CD8-positive, alpha-beta memory T cell (primary cell): ENCODE measurements at regions of chr17 and their contacts with region 1.

Region 1: GRCh38 chr17:17812211-17813057 is 24.4 kb downstream of the SREBF1 start:
- DNase-seq: peak; percentile 56 to 75 (median 67)
- H3K4me3 ChIP-seq: no peak overlapping the region
- H3K4me3 Mint-ChIP-seq: peak overlapping the region in 1 of 7 donors; percentile 18
- H3K27ac ChIP-seq: no peak overlapping the region
- H3K27ac Mint-ChIP-seq: peak overlapping the region in 6 of 8 donors; percentile 17 to 78 (median 54)
- H3K4me1 ChIP-seq: peaks cover 7% of the 10 kb centered on the region
- H3K4me1 Mint-ChIP-seq: peaks cover 6 to 17% (median 12%) of the 10 kb centered on the region in 3 donors
- H3K27me3 ChIP-seq: no peaks in the 10 kb centered on the region
- H3K27me3 Mint-ChIP-seq: no peaks in the 10 kb centered on the region

Region 2: DNA sequence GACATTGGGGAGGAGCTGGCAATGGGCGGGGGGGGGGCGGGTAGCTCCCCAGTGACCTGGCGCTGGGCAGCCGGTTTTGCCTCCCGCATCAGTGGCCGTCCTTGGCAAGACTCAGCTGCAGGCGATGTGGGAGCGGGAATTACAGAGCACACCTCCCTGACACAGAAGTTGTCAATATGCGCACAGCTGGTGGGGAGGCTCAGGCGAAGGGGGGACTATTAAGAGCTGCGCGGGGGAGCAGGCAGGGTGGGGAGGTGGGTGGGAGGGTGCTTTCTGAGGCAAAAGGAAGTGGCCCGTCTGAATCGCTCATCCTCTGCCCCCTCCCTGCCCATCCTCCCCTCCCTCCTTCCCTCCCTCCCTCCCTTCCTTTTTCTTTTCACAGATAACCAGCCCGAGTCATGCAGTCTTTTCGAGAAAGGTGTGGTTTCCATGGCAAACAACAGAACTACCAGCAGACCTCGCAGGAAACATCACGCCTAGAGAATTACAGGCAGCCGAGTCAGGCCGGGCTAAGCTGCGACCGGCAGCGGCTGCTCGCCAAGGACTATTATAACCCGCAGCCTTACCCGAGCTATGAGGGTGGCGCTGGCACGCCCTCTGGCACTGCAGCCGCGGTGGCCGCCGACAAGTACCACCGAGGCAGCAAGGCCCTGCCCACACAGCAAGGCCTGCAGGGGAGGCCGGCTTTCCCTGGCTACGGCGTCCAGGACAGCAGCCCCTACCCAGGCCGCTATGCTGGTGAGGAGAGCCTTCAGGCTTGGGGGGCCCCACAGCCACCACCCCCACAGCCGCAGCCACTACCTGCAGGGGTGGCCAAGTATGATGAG is 19.7 kb before region 1 on chr17:
- CTCF ChIA-PET with region 1: interaction called, 11 read pairs
- POLR2A ChIA-PET with region 1: no interaction called
- DNase-seq: peak; percentile 41 to 78 (median 74)
- H3K4me3 ChIP-seq: no peak overlapping the region
- H3K4me3 Mint-ChIP-seq: peak overlapping the region; percentile 27 to 86 (median 73)
- H3K27ac ChIP-seq: peak overlapping the region; percentile 54
- H3K27ac Mint-ChIP-seq: peak overlapping the region; percentile 53 to 92 (median 71)
- H3K4me1 ChIP-seq: peaks cover 20% of the 10 kb centered on the region
- H3K4me1 Mint-ChIP-seq: peaks cover 18 to 27% (median 18%) of the 10 kb centered on the region in 3 donors
- H3K27me3 ChIP-seq: no peaks in the 10 kb centered on the region
- H3K27me3 Mint-ChIP-seq: peaks cover 0 to 1% of the 10 kb centered on the region in 2 donors

Region 3: DNA sequence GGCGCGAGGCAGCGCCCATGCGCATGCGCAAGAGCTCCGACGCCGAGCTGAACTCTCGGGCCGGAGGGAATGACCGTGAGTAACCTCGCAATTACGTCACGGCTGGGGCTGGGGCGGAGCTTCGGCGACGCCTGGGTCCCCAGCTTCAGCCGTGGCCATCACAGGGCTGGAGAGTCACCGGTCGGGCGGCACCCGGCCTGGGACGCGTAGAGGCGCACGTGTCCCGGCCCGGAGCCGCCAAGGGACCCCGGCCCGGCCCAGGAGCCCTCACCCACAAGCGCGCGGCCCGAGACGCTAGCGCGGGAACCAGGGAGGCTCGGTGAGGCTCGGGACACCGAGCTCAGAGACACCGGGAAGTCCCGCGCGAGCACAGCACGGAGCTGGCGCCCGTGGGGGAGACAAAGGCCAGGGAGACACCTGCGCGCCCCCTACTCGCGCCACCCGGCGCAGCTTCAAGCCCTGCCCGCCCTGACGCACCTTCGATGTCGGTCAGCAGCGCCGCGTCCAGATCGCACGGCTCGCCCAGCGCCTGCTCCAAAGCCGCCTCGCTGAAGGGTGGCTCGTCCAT is 23.9 kb after region 1 on chr17:
- CTCF ChIA-PET with region 1: interaction called, 13 read pairs
- POLR2A ChIA-PET with region 1: interaction called, 4 read pairs
- DNase-seq: peak; percentile 96 to 98 (median 98)
- H3K4me3 ChIP-seq: peak overlapping the region; percentile 47
- H3K4me3 Mint-ChIP-seq: peak overlapping the region; percentile 82 to 94 (median 88)
- H3K27ac ChIP-seq: peak overlapping the region; percentile 97
- H3K27ac Mint-ChIP-seq: peak overlapping the region; percentile 90 to 99 (median 98)
- H3K4me1 ChIP-seq: peaks cover 65% of the 10 kb centered on the region
- H3K4me1 Mint-ChIP-seq: peaks cover 55 to 72% (median 58%) of the 10 kb centered on the region in 3 donors
- H3K27me3 ChIP-seq: no peaks in the 10 kb centered on the region
- H3K27me3 Mint-ChIP-seq: peaks cover 0 to 7% of the 10 kb centered on the region in 2 donors

Region 4: GRCh38 chr17:17859909-17860765 is 47.7 kb after region 1 on chr17:
- CTCF ChIA-PET with region 1: interaction called, 116 read pairs
- POLR2A ChIA-PET with region 1: no interaction called
- DNase-seq: peak; percentile 60 to 79 (median 62)
- H3K4me3 ChIP-seq: no peak overlapping the region
- H3K4me3 Mint-ChIP-seq: no peak overlapping the region
- H3K27ac ChIP-seq: no peak overlapping the region
- H3K27ac Mint-ChIP-seq: no peak overlapping the region
- H3K4me1 ChIP-seq: peaks cover 37% of the 10 kb centered on the region
- H3K4me1 Mint-ChIP-seq: peaks cover 11 to 31% (median 29%) of the 10 kb centered on the region in 3 donors
- H3K27me3 ChIP-seq: no peaks in the 10 kb centered on the region
- H3K27me3 Mint-ChIP-seq: no peaks in the 10 kb centered on the region

Region 5: DNA sequence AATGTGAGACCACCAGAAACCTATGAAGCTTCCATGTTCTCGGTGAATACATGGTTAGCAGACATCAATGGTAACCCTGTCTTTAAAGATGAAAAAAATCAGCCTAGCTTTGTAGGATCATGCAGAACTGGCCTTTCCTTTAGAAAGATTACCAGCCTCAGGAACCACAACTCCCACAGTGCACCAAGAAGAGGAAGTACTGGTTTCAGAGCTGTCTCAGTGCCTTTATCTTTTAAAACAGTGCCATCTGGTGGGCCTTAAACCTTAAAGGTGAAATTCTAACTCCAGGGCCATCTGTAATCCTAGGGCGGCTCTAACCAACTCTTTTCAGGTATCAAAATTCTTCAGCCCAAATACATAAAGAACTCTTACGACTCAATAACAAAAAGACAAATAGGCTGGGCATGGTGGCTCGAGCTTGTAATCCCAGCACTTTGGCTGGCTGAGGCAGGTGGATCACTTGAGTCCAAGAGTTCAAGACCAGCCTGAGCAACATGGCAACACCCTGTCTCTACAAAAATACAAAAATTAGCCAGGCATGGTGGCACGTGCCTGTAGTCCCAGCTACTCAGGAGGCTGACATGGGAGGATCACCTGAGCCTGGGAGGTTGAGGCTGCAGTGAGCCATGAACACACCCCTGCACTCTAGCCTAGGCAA is 221.1 kb after region 1 on chr17:
- CTCF ChIA-PET with region 1: interaction called, 12 read pairs
- POLR2A ChIA-PET with region 1: no interaction called
- DNase-seq: peak; percentile 21 to 68 (median 63)
- H3K4me3 ChIP-seq: no peak overlapping the region
- H3K4me3 Mint-ChIP-seq: peak overlapping the region in 1 of 7 donors; percentile 66
- H3K27ac ChIP-seq: no peak overlapping the region
- H3K27ac Mint-ChIP-seq: peak overlapping the region in 6 of 8 donors; percentile 67 to 91 (median 80)
- H3K4me1 ChIP-seq: peaks cover 18% of the 10 kb centered on the region
- H3K4me1 Mint-ChIP-seq: peaks cover 21 to 35% (median 30%) of the 10 kb centered on the region in 3 donors
- H3K27me3 ChIP-seq: no peaks in the 10 kb centered on the region
- H3K27me3 Mint-ChIP-seq: peaks cover 0 to 1% of the 10 kb centered on the region in 2 donors